GM23248 (cell line): ENCODE measurements at regions of chr2 and their contacts with region 1.

Region 1: GRCh38 chr2:33033606-33034081 is 86.9 kb downstream of the LTBP1 start:
- DNase-seq: peak; percentile 76
- H3K4me3 ChIP-seq: peak overlapping the region; percentile 69
- H3K27ac ChIP-seq: no peak overlapping the region
- H3K4me1 ChIP-seq: peaks cover 12% of the 10 kb centered on the region
- H3K27me3 ChIP-seq: no peaks in the 10 kb centered on the region

Region 2: DNA sequence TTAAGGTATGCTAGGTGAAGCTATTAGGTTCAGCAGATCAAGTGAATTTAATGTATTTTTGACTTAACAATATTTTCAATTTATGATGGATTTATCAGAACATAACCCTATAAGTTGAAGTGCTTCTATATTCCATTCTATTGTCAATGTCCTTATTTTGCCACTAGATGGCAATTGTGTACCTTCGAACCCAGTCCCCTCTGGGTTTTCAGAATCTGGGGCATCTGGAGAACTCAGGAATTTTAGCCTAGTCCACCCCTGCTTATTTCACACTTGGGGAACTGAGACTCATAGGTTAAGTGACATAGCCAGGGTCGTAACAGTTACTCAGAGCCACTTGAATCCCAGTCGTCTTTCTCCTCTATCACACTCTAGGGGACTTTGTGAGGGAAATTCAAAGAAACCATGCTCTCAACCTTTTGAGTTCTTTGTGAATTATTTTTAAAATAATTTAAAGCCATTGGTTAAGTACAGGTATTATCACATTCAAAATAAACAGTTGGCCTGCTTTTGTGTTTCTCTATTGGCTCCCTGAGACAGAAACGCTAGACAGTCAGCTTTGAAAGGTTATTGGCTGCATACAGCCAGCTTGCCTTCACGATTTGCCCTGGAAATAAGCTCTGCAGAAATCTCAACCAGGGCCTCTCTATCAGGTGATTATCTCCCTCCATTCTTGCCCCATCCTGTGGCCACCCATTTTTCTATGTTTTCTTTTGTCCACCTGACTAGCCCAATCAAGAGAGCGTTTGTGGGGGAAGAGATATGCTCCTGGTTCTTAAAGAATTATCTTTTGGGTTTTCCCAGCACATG is 260.8 kb before region 1 on chr2:
- in situ Hi-C with region 1: loop called (anchors 5 kb)
- DNase-seq: peak; percentile 72
- H3K4me3 ChIP-seq: no peak overlapping the region
- H3K27ac ChIP-seq: no peak overlapping the region
- H3K4me1 ChIP-seq: no peaks in the 10 kb centered on the region
- H3K27me3 ChIP-seq: no peaks in the 10 kb centered on the region

Region 3: DNA sequence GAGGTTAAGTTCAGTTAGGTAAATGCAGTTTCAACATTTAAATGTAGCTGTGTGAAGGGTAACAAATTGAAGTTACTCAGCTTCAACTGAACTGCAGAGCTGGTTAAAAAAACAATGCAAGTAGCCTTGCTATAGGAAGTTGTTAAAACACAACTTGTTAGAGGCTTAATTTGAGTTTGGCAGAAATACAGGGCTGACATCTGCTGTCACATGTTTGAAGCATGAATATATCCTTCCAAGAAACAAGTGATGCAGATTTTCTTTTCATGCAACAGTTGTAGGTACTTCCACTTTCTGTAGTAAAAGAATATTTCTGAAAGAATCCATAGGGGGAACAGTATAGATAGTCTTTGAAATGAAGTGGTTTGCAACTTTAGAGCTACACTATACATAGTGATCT is 234.1 kb after region 1 on chr2:
- in situ Hi-C with region 1: loop called (anchors 5 kb)
- DNase-seq: peak; percentile 44
- H3K4me3 ChIP-seq: no peak overlapping the region
- H3K27ac ChIP-seq: peak overlapping the region; percentile 38; the same call in 1 of the 2 replicates
- H3K4me1 ChIP-seq: peaks cover 45% of the 10 kb centered on the region
- H3K27me3 ChIP-seq: no peaks in the 10 kb centered on the region

Region 4: DNA sequence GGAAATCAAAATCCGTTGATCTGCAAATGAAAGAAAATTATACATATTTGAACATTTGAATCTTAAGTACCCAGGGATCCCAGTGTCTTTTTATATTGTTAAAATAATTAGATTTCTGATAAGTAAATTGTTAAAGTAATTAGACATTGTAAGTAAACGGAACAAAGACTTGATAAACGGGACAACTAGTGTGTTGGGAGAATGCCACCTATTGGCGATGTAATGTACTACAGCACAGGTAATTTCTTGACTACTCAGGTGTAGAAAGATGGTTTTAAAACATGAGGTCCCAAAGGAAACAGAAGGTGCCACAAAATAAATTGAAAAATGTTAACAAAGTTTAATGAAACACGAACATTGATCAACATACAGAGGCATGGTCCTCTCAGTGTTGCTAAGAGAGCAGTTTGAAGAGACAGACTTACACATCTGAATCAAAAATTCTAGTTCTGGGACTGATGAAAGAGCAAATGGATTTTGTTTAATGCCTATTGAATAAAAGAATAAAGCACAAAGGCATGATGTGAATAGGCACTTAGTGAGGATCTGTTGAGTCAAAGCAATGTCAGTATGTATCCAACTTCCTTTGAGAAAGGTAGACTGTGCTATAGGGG is 339.4 kb after region 1 on chr2:
- in situ Hi-C with region 1: loop called (anchors 10 kb)
- DNase-seq: no peak
- H3K4me3 ChIP-seq: no peak overlapping the region
- H3K27ac ChIP-seq: no peak overlapping the region
- H3K4me1 ChIP-seq: peaks cover 33% of the 10 kb centered on the region
- H3K27me3 ChIP-seq: no peaks in the 10 kb centered on the region

Region 5: GRCh38 chr2:33599175-33599942 is 565.7 kb after region 1 on chr2 and contains the start of gene FAM98A:
- in situ Hi-C with region 1: loop called (anchors 25 kb)
- DNase-seq: peak; percentile 100
- H3K4me3 ChIP-seq: peak within 1 kb of the TSS; percentile 82
- H3K27ac ChIP-seq: peak within 1 kb of the TSS; percentile 86
- H3K4me1 ChIP-seq: peaks cover 42% of the 10 kb centered on the region
- H3K27me3 ChIP-seq: no peaks in the 10 kb centered on the region
- total RNA-seq, gene FAM98A: 24.2 and 29.2 TPM in 2 replicates